OCI-LY7 (cell line): ENCODE measurements at regions of chr10 and their contacts with region 1.

Region 1: GRCh38 chr10:70404036-70404786 is at the start of gene EIF4EBP2:
- DNase-seq: peak; percentile 94
- H3K4me3 ChIP-seq: peak within 1 kb of the TSS; percentile 92
- H3K27ac ChIP-seq: peak within 1 kb of the TSS; percentile 38
- H3K4me1 ChIP-seq: peaks cover 20% of the 10 kb centered on the region
- CTCF ChIP-seq: no peak
- total RNA-seq, gene EIF4EBP2: 20.3 and 24.5 TPM in 2 replicates

Region 2: DNA sequence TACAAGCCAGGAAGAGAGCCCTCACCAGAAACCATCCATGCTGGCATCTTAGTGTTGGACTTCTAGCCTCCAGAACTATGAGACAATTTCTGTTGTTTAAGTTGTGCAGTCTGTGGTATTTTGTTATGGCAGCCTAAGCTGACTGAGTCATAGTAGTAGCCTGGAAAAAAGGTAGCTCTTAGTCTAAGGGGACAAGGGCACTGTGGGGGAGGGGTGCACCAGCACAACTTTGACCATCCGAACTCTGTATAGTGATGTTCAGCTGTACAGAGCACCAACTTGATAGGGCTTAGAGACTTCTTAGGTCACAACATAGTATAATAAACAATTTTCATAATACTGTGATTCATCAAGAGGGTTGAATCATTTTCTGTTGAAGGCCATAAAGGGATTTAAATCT is 14.0 kb after region 1 on chr10:
- CTCF ChIA-PET with region 1: no interaction called
- POLR2A ChIA-PET with region 1: interaction called, 13 read pairs
- intact Hi-C with region 1: no loop called
- DNase-seq: no peak
- H3K4me3 ChIP-seq: no peak overlapping the region
- H3K27ac ChIP-seq: no peak overlapping the region
- H3K4me1 ChIP-seq: no peaks in the 10 kb centered on the region
- CTCF ChIP-seq: no peak